Aorta (tissue), 5 donors: ENCODE measurements at regions of chr3 and their contacts with region 1.

Region 1: GRCh38 chr3:112990672-112991602 is at the start of gene GTPBP8:
- DNase-seq: peak; percentile 95 to 97
- ATAC-seq: peak; percentile 96
- H3K4me3 ChIP-seq: peak within 1 kb of the TSS; percentile 56 to 96
- H3K27ac ChIP-seq: peak within 1 kb of the TSS; percentile 57 to 99
- H3K4me1 ChIP-seq: no peaks in the 10 kb centered on the region
- H3K27me3 ChIP-seq: no peaks in the 10 kb centered on the region
- total RNA-seq, gene GTPBP8: 14.2 to 15.5 TPM

Region 2: GRCh38 chr3:113019182-113020137 is 28.5 kb after region 1 on chr3:
- intact Hi-C with region 1: loop called in 1 of 2 experiments (anchors 2 kb)
- DNase-seq: peak; percentile 93 to 96
- ATAC-seq: peak; percentile 97
- H3K4me3 ChIP-seq: peak overlapping the region; percentile 65 to 82
- H3K27ac ChIP-seq: peak overlapping the region; percentile 51 to 74
- H3K4me1 ChIP-seq: no peaks in the 10 kb centered on the region
- H3K27me3 ChIP-seq: no peaks in the 10 kb centered on the region